Naive thymus-derived CD4-positive, alpha-beta T cell (primary cell): ENCODE measurements at regions of chr12 and their contacts with region 1.

Region 1: DNA sequence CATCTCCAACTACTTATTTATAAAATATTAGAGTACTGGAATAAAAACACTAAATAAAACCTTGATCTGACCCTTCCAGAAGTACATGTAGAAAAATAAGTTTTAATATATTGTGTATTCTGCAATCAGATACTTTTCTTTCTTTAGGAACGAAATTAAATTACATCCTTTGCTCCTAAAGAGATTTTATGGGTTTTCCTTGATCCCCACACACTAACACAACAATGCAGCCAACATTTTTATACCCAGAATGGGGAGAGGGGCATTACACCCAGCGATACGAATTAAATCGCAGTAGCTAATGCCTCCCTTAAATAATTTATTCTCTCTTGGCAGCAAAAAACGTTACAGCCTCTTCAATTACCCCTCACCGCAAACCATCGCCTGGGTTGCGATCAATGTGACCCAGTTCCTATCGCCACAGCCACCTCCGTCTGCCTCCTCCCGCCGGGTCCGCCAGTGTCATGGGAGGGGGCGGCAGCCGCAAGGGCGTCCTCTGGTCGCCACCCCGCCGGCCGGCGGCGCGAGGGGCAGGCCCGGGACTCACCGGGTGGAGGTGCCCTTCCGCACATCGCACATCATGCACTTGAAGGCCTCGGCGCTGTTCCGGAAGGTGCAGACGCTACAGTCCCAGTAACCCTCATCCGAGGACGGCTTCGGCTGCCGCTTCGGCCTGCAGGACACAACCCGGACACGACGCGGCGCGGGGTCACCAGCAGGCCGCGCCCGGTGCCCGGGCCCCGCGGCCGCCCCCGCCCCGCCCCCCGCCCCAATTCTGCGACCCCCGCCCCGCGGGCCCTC is 796 bp downstream of the YAF2 start:
- DNase-seq: peak; percentile 60 to 75 (median 71)
- ATAC-seq: peak; percentile 82
- H3K4me3 ChIP-seq: peak overlapping the region; percentile 58
- H3K4me3 Mint-ChIP-seq: peak overlapping the region; percentile 90 to 97 (median 92)
- H3K27ac ChIP-seq: peak overlapping the region; percentile 92
- H3K27ac Mint-ChIP-seq: peak overlapping the region; percentile 82 to 94 (median 89)
- H3K4me1 ChIP-seq: peaks cover 18 to 23% of the 10 kb centered on the region in 2 donors
- H3K4me1 Mint-ChIP-seq: peaks cover 31 to 58% (median 47%) of the 10 kb centered on the region in 7 donors
- H3K27me3 ChIP-seq: no peaks in the 10 kb centered on the region
- H3K27me3 Mint-ChIP-seq: no peaks in the 10 kb centered on the region

Region 2: GRCh38 chr12:42097971-42098370 is 139.3 kb before region 1 on chr12:
- CTCF ChIA-PET with region 1: no interaction called
- POLR2A ChIA-PET with region 1: no interaction called
- intact Hi-C with region 1: loop called (anchors 1 to 2 kb)
- DNase-seq: peak in 7 of 9 donors; percentile 56 to 79 (median 68)
- ATAC-seq: peak; percentile 94
- H3K4me3 ChIP-seq: peak overlapping the region; percentile 48
- H3K4me3 Mint-ChIP-seq: peak overlapping the region; percentile 84 to 97 (median 90)
- H3K27ac ChIP-seq: peak overlapping the region; percentile 82
- H3K27ac Mint-ChIP-seq: peak overlapping the region; percentile 92 to 100 (median 97)
- H3K4me1 ChIP-seq: peaks cover 24 to 31% of the 10 kb centered on the region in 2 donors
- H3K4me1 Mint-ChIP-seq: peaks cover 33 to 48% (median 43%) of the 10 kb centered on the region in 7 donors
- H3K27me3 ChIP-seq: no peaks in the 10 kb centered on the region
- H3K27me3 Mint-ChIP-seq: no peaks in the 10 kb centered on the region

Region 3: GRCh38 chr12:42221726-42222125 is 15.5 kb before region 1 on chr12:
- CTCF ChIA-PET with region 1: no interaction called
- POLR2A ChIA-PET with region 1: no interaction called
- intact Hi-C with region 1: loop called in 1 of 2 experiments (anchors 1 kb)
- DNase-seq: no peak
- ATAC-seq: no peak
- H3K4me3 ChIP-seq: no peak overlapping the region
- H3K4me3 Mint-ChIP-seq: peak overlapping the region in 5 of 10 donors; percentile 1 to 44 (median 24)
- H3K27ac ChIP-seq: no peak overlapping the region
- H3K27ac Mint-ChIP-seq: peak overlapping the region in 1 of 9 donors; percentile 38
- H3K4me1 ChIP-seq: peaks cover 9 to 12% of the 10 kb centered on the region in 2 donors
- H3K4me1 Mint-ChIP-seq: peaks cover 11 to 84% (median 67%) of the 10 kb centered on the region in 7 donors
- H3K27me3 ChIP-seq: no peaks in the 10 kb centered on the region
- H3K27me3 Mint-ChIP-seq: no peaks in the 10 kb centered on the region

Region 4: DNA sequence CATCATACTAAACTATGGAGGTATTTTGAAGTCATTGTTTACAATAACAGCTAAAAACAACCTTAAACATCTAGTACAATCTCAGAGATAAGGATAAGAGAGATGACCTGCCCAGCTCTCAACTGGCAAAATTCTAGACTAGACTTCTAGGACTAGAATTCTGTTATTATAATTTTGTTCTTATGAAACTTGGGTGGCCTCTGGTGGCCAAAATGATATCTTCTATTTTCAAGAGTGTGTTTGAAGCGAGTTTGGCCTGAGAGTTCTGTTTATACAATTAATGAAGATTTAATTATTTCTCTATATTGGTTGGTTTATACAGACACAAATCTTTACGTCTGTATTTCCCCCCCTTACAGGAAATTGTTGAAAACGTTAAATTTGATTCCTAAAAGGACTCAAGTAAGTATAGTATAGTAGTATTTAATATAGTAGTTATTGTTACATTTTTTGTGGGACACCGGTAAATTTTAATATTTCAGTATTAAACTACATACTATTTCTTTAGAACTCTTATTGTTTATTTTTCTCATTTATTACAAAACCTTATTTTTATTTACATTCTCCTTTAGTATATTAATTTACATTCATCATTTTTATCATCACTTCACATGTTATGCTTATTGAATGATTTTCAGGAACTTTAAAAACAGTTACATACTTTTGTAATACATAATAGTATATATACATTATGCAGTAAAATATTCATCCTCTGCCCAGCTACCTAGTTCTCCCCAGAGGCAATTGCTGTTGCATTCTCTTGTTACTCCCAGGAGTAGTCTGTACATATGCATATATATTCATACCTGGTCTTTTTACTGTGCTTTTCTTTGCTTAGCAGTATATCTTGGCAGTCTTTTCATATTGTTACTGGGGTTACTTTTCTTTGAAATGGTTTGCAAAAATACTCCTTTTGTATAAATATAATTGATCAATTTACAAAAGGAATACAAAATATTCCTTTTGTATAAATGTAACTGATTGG is 95.3 kb after region 1 on chr12:
- CTCF ChIA-PET with region 1: no interaction called
- POLR2A ChIA-PET with region 1: interaction called, 15 read pairs
- intact Hi-C with region 1: loop called in 1 of 2 experiments (anchors 1 kb)
- DNase-seq: peak in 7 of 9 donors; percentile 12 to 54 (median 42)
- ATAC-seq: peak; percentile 77
- H3K4me3 ChIP-seq: no peak overlapping the region
- H3K4me3 Mint-ChIP-seq: peak overlapping the region in 3 of 10 donors; percentile 7 to 30 (median 14)
- H3K27ac ChIP-seq: no peak overlapping the region
- H3K27ac Mint-ChIP-seq: peak overlapping the region in 1 of 9 donors; percentile 2
- H3K4me1 ChIP-seq: peaks cover 5 to 31% of the 10 kb centered on the region in 2 donors
- H3K4me1 Mint-ChIP-seq: peaks cover 47 to 87% (median 73%) of the 10 kb centered on the region in 7 donors
- H3K27me3 ChIP-seq: no peaks in the 10 kb centered on the region
- H3K27me3 Mint-ChIP-seq: no peaks in the 10 kb centered on the region

Region 5: GRCh38 chr12:43805860-43806736 is 1568.8 kb after region 1 on chr12 and contains the start of gene TWF1:
- CTCF ChIA-PET with region 1: no interaction called
- POLR2A ChIA-PET with region 1: no interaction called
- intact Hi-C with region 1: loop called in 1 of 2 experiments (anchors 5 kb)
- DNase-seq: peak; percentile 76 to 94 (median 89)
- ATAC-seq: peak; percentile 97
- H3K4me3 ChIP-seq: peak within 1 kb of the TSS; percentile 67
- H3K4me3 Mint-ChIP-seq: peak within 1 kb of the TSS; percentile 94 to 100 (median 100)
- H3K27ac ChIP-seq: peak within 1 kb of the TSS; percentile 94
- H3K27ac Mint-ChIP-seq: peak within 1 kb of the TSS; percentile 98 to 100 (median 100)
- H3K4me1 ChIP-seq: peaks cover 20 to 33% of the 10 kb centered on the region in 2 donors
- H3K4me1 Mint-ChIP-seq: peaks cover 13 to 73% (median 59%) of the 10 kb centered on the region in 7 donors
- H3K27me3 ChIP-seq: no peaks in the 10 kb centered on the region
- H3K27me3 Mint-ChIP-seq: no peaks in the 10 kb centered on the region
- total RNA-seq, gene TWF1: 26.7 to 51.2 (median 35.6) TPM